Activated CD4-positive, alpha-beta memory T cell treated with anti-CD3 and anti-CD28 coated beads for 36 hours (primary cell): ENCODE measurements at regions of chr20 and their contacts with region 1.

Region 1: GRCh38 chr20:34516247-34517113 is at the start of gene DYNLRB1:
- DNase-seq: peak; percentile 96
- H3K4me3 Mint-ChIP-seq: peak within 1 kb of the TSS; percentile 98
- H3K27ac Mint-ChIP-seq: peak within 1 kb of the TSS; percentile 92
- H3K4me1 Mint-ChIP-seq: peaks cover 34% of the 10 kb centered on the region
- H3K27me3 Mint-ChIP-seq: no peaks in the 10 kb centered on the region
- total RNA-seq, gene DYNLRB1: 101 to 108 TPM

Region 2: DNA sequence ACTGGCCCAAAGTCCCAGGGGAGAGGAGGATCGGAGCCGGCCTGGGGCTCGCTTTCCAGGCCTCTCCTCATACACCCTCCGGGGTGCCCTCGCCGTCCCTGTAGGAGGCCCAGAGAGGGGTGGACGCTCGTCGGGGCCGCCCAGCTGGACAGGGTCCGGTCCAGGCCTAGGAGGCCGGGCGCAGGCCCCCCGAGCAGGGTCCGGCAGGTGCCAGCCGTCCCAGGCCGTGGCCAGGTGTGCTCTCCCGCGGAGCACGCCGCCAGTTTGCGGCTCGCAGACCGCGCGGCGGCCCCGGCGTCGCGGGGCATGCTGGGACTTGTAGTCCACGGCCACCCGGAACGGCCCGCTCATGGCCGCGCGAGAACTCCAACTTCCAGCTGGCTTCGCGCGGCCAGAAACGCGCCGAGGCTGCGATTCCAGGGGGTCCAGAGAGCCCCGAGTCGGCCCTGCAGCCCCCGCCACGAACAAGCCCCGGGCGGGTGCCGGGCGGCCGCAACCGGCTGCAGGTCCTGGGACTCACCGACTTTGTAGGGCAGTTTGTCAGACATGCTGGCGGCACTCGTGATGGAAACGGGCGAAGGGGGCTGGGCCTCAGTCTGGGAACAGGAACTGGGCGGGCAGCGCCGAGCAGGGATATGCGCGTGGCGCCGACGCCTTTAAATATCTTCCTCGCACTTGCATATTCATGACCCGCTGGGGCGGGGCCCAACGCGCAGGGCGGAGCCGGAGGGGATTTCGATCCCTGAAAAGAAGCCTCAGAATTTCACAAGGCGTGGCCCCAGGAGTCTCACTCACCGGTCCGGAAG is 213.6 kb before region 1 on chr20 and contains the start of gene AHCY:
- CTCF ChIA-PET with region 1: interaction called, 8 read pairs
- POLR2A ChIA-PET with region 1: interaction called, 21 read pairs
- intact Hi-C with region 1: loop called (anchors 1 kb)
- DNase-seq: peak; percentile 97
- H3K4me3 Mint-ChIP-seq: peak within 1 kb of the TSS; percentile 89
- H3K27ac Mint-ChIP-seq: peak within 1 kb of the TSS; percentile 84
- H3K4me1 Mint-ChIP-seq: peaks cover 22% of the 10 kb centered on the region
- H3K27me3 Mint-ChIP-seq: no peaks in the 10 kb centered on the region
- total RNA-seq, gene AHCY: 160 to 163 TPM

Region 3: GRCh38 chr20:34363062-34363464 is 153.4 kb before region 1 on chr20 and contains the start of gene ITCH:
- CTCF ChIA-PET with region 1: interaction called, 7 read pairs
- POLR2A ChIA-PET with region 1: interaction called, 8 read pairs
- intact Hi-C with region 1: loop called (anchors 2 kb)
- DNase-seq: peak; percentile 96
- H3K4me3 Mint-ChIP-seq: peak within 1 kb of the TSS; percentile 93
- H3K27ac Mint-ChIP-seq: peak within 1 kb of the TSS; percentile 92
- H3K4me1 Mint-ChIP-seq: peaks cover 28% of the 10 kb centered on the region
- H3K27me3 Mint-ChIP-seq: no peaks in the 10 kb centered on the region
- total RNA-seq, gene ITCH: 42.3 to 45.2 TPM

Region 4: GRCh38 chr20:34473262-34473883 is 43.1 kb before region 1 on chr20:
- CTCF ChIA-PET with region 1: interaction called, 12 read pairs
- POLR2A ChIA-PET with region 1: no interaction called
- intact Hi-C with region 1: no loop called
- DNase-seq: peak; percentile 64
- H3K4me3 Mint-ChIP-seq: no peak overlapping the region
- H3K27ac Mint-ChIP-seq: no peak overlapping the region
- H3K4me1 Mint-ChIP-seq: peaks cover 8% of the 10 kb centered on the region
- H3K27me3 Mint-ChIP-seq: no peaks in the 10 kb centered on the region

Region 5: DNA sequence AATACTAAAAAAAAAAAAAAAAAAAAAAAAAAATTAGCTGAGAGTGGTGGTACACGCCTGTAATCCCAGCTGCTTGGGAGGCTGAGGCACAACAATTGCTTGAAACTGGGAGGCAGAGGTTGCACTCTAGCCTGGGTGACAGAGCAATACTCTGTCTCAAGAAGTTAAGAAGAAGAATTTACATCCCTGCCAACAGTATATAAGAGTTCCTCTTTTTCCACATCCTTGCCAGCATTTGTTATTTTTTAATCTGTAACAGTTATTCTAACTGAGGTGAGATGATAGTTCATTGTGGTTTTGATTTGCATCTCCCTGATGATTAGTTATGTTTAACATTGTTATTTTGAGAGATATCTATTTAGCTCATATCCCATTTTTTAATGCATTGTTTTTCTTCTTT is 20.6 kb before region 1 on chr20:
- CTCF ChIA-PET with region 1: no interaction called
- POLR2A ChIA-PET with region 1: no interaction called
- intact Hi-C with region 1: no loop called
- DNase-seq: no peak
- H3K4me3 Mint-ChIP-seq: no peak overlapping the region
- H3K27ac Mint-ChIP-seq: no peak overlapping the region
- H3K4me1 Mint-ChIP-seq: peaks cover 2% of the 10 kb centered on the region
- H3K27me3 Mint-ChIP-seq: no peaks in the 10 kb centered on the region

Region 6: GRCh38 chr20:34538671-34539123 is 22.2 kb after region 1 on chr20:
- CTCF ChIA-PET with region 1: interaction called, 24 read pairs
- POLR2A ChIA-PET with region 1: interaction called, 3 read pairs
- intact Hi-C with region 1: no loop called
- DNase-seq: peak; percentile 74
- H3K4me3 Mint-ChIP-seq: no peak overlapping the region
- H3K27ac Mint-ChIP-seq: no peak overlapping the region
- H3K4me1 Mint-ChIP-seq: peaks cover 34% of the 10 kb centered on the region
- H3K27me3 Mint-ChIP-seq: no peaks in the 10 kb centered on the region

Region 7: DNA sequence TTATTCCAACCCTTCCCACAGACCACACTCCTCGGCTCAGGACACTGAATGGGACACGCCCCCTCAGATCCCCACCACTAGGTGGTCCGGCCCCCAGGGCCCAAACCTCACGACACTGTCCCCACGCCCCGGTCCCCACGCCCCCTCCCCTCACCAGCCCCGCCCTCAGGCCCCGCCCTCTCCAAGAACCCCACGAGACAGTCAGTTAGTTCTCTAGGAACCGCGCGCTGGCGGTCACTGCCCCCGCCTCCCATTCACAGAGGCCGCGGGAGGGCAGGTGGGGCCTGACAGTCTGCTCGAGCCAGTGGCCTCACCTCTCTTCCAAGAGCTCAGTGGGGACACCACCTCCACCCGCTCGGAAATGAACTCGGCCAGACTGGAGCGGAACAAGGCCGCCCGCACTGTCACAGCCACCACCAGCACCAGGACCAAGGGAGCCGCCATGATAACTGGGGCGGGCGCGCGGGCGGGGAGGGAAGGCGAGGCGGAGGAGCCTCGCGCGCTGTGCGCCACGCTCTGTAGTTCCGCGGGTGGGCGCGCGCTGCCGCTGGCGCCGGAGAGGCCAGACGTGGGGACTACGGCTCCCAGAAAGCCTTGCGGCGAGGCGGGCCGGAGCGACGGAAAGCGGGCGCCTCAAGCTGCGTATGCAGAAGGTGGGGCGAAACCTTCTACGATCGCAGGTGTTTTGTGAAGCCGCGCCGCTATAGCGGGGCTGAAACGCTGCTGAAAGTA is 160.3 kb after region 1 on chr20 and contains the start of gene PIGU:
- CTCF ChIA-PET with region 1: no interaction called
- POLR2A ChIA-PET with region 1: interaction called, 7 read pairs
- intact Hi-C with region 1: loop called (anchors 2 kb)
- DNase-seq: peak; percentile 97
- H3K4me3 Mint-ChIP-seq: peak within 1 kb of the TSS; percentile 94
- H3K27ac Mint-ChIP-seq: peak within 1 kb of the TSS; percentile 93
- H3K4me1 Mint-ChIP-seq: peaks cover 28% of the 10 kb centered on the region
- H3K27me3 Mint-ChIP-seq: no peaks in the 10 kb centered on the region
- total RNA-seq, gene PIGU: 19.0 to 21.3 TPM

Region 8: DNA sequence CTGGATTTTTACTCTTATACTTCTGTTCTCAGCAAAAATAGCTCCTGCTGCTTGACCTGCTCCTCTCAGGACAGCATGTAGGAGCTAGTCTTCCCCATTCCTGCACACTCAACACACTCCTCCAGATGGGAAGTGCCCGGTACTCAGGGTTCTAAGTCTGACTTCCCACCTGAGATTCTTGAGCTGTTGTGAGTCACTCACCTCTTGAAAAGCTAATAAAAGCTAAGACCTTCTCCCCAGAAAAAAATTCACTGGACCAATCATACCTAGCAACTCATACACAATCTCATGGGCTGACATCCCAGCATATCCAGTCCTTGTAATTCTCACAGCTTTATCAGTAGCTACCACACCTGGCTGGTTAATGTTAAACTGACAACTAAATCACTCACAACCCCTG is 522.7 kb after region 1 on chr20:
- CTCF ChIA-PET with region 1: no interaction called
- POLR2A ChIA-PET with region 1: no interaction called
- intact Hi-C with region 1: no loop called
- DNase-seq: no peak
- H3K4me3 Mint-ChIP-seq: no peak overlapping the region
- H3K27ac Mint-ChIP-seq: peak overlapping the region; percentile 35
- H3K4me1 Mint-ChIP-seq: peaks cover 11% of the 10 kb centered on the region
- H3K27me3 Mint-ChIP-seq: no peaks in the 10 kb centered on the region